Breast epithelium (tissue), 4 donors: ENCODE measurements at regions of chr2 and their contacts with region 1.

Region 1: DNA sequence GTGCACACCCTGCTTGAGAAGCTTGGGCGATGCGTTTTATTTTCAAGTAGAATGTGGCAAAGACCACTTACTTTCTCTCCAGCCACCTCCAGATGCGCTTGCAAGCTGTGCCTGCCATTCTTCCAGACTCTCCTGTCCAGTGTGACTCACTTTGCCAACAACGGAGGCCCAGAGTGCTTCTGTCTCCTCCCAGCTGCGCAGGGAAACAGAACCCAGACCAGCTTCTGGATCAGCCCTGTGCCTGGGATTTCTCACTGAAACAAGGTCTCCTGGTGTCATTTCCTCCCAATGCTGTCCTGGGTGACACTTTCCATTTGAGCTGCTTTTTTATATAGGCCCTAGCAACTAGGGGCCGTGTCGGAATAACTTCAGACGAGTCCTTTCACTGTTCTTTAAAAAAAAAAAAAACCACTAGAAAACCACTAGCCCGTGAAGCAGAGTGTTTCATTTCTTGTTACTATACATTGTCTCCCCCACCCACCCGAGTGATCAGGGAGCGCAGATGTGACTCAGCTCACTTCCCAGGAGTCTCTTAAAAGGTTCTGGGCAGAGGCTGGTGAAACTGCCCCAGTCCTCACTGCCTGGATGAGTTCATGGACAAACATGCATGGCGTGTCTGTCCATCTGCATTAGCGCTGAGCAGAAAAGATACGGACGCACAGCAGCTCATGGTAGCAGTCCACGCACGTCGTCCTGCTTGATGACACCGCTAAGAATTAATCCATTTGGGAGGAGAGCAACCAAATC is 25.3 kb upstream of the RPL31 start:
- DNase-seq: no peak
- H3K4me3 ChIP-seq: no peak overlapping the region
- H3K27ac ChIP-seq: no peak overlapping the region
- H3K4me1 ChIP-seq: no peaks in the 10 kb centered on the region
- H3K27me3 ChIP-seq: no peaks in the 10 kb centered on the region
- CTCF ChIP-seq: no peak
- POLR2A ChIP-seq: no peak

Region 2: GRCh38 chr2:100610381-100610831 is 366.4 kb before region 1 on chr2:
- intact Hi-C with region 1: loop called (anchors 10 kb)
- DNase-seq: peak; percentile 37 to 60
- H3K4me3 ChIP-seq: no peak overlapping the region
- H3K27ac ChIP-seq: no peak overlapping the region
- H3K4me1 ChIP-seq: no peaks in the 10 kb centered on the region
- H3K27me3 ChIP-seq: no peaks in the 10 kb centered on the region
- CTCF ChIP-seq: peak in 2 of 3 donors; percentile 27 to 50
- POLR2A ChIP-seq: no peak

Region 3: GRCh38 chr2:100936070-100936741 is 40.6 kb before region 1 on chr2:
- intact Hi-C with region 1: loop called (anchors 2 kb)
- DNase-seq: no peak
- H3K4me3 ChIP-seq: no peak overlapping the region
- H3K27ac ChIP-seq: no peak overlapping the region
- H3K4me1 ChIP-seq: no peaks in the 10 kb centered on the region
- H3K27me3 ChIP-seq: no peaks in the 10 kb centered on the region
- CTCF ChIP-seq: no peak
- POLR2A ChIP-seq: no peak